Heart left ventricle (tissue), 16 donors: ENCODE measurements at regions of chr9 and their contacts with region 1.

Region 1: GRCh38 chr9:113340017-113340699 is at the start of gene WDR31:
- DNase-seq: peak; percentile 87 to 93 (median 89)
- ATAC-seq: peak; percentile 72 to 91 (median 90)
- H3K4me3 ChIP-seq: peak within 1 kb of the TSS; percentile 43 to 99 (median 80)
- H3K27ac ChIP-seq: peak within 1 kb of the TSS; percentile 37 to 90 (median 80)
- H3K4me1 ChIP-seq: peaks cover 0 to 26% (median 12%) of the 10 kb centered on the region in 12 donors
- H3K27me3 ChIP-seq: no peaks in the 10 kb centered on the region
- CTCF ChIP-seq: peak in 1 of 12 donors; percentile 31
- POLR2A ChIP-seq: peak in 1 of 2 donors; percentile 52
- total RNA-seq, gene WDR31: 8.1 to 22.4 (median 14.4) TPM

Region 2: DNA sequence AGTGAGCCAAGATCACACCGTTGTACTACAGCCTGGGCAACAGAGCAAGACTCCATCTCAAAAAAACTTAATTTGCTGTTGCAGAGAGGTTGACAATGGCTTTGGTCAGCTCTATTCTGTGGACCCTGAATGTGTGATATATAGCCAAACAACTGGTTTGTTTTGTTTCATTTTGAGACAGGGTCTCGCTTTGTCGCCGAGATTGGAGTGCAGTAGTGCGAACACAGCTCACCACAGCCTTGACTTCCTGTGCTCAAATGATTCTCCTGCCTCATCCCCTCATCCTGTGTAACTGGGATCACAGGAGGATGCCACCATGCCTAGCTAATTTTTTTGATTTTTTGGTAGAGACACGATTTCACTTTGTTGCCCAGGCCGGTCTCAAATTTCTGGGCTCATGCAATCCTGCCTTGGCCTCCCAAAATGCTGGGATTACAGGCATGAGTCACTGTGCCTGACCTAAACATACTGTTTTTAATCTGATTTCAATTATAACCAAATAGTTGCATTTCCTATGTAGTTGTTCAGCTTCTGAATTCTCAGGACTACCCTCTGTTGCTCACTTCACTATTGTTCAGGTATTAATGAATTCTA is 46.8 kb before region 1 on chr9:
- intact Hi-C with region 1: no loop called
- DNase-seq: no peak
- ATAC-seq: no peak
- H3K4me3 ChIP-seq: no peak overlapping the region
- H3K27ac ChIP-seq: no peak overlapping the region
- H3K4me1 ChIP-seq: peaks cover 0 to 13% (median 0%) of the 10 kb centered on the region in 12 donors
- H3K27me3 ChIP-seq: no peaks in the 10 kb centered on the region
- CTCF ChIP-seq: no peak
- POLR2A ChIP-seq: no peak

Region 3: DNA sequence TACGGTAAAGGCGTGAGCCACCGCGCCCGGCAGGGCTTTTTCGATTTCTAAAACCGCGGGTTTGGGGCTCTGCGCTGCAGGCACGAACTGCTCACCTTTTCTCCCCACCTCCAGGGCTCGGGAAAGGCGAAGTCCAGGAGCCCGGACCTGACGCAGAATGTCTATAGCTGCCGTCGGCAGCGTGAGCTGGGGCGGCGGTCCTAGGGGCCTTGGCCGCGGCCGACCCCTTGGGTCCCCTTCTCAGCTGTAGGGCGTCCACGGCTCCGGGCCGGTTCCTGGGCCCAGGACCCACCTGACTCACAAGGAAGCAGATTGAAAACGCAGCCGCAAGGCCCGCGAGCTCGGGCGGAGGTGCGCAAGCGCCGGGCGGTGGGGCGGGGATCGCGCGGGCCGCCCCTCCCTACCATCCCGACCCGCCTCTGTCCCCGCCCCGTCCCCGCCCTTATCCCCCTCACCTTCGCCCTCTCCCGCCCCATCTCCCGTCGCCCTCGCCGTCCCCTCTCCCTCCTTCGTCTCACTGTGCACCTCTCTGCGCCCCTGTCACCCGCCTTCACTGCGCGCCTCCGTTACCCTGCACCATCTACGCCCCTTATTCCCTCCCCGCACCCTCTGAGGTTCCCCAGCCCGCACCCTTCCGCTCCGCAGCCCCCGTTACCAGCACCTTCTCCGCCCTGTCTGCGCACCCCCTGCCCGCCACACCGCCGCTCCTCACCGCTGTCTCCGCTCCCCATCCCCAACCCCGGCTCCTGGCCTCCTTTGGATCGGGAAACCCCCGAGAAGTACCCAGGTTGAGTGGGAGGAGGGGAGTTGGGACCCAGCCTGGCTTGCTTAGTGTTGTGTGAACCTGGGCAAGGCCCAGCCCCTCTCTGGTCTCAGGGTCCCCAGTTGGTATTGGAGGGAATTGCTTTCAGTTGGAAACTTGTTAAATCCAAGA is 36.7 kb after region 1 on chr9 and contains the start of gene HDHD3:
- intact Hi-C with region 1: loop called in 3 of 10 experiments (anchors 5 kb)
- DNase-seq: peak; percentile 74 to 89 (median 80)
- ATAC-seq: peak; percentile 88 to 96 (median 94)
- H3K4me3 ChIP-seq: peak within 1 kb of the TSS; percentile 65 to 99 (median 84)
- H3K27ac ChIP-seq: peak within 1 kb of the TSS; percentile 29 to 86 (median 77)
- H3K4me1 ChIP-seq: peaks cover 0 to 18% (median 4%) of the 10 kb centered on the region in 12 donors
- H3K27me3 ChIP-seq: no peaks in the 10 kb centered on the region
- CTCF ChIP-seq: no peak
- POLR2A ChIP-seq: peak in 1 of 2 donors; percentile 83
- total RNA-seq, gene HDHD3: 11.7 to 53.8 (median 19.4) TPM